Adrenal gland (tissue), 19 donors: ENCODE measurements at regions of chr10 and their contacts with region 1.

Region 1: DNA sequence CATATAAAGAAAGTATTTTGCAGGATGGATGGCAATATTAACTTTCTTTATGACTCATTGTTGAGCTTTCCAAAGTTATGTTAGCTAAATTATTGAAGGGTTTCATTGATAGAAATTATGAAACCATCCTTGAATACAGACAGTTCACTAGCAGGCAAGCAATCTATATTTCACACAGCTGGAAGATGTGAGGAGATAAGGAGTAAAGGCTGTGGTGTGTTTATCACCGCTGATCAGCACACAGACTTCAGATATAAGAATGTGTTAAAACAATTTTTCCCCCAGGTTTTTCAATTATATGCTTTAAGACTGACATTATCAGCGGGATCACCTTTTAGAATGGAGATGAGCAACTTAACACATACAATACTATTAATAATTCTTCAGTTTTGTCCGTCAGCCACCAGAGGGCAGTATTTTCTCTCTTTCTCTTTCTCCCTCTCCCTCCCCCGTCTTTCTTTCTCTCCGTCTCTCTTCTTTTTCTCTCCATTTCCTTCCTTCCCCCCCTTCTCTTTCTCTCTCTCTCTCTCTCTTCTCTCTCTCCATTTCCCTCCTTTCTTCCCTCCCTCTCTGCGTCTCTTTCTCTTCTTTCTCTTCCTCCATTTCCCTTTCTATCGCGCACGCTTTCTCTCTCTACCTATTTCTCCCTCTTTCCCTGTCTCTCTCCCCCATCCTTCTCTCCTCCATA is 62.9 kb upstream of the FAM171A1 start:
- DNase-seq: peak in 4 of 7 donors; percentile 33 to 54 (median 44)
- H3K4me3 ChIP-seq: peak overlapping the region in 1 of 4 donors; percentile 31
- H3K27ac ChIP-seq: no peak overlapping the region
- H3K4me1 ChIP-seq: no peaks in the 10 kb centered on the region
- H3K27me3 ChIP-seq: no peaks in the 10 kb centered on the region
- CTCF ChIP-seq: peak; percentile 58 to 92 (median 80)
- POLR2A ChIP-seq: no peak

Region 2: DNA sequence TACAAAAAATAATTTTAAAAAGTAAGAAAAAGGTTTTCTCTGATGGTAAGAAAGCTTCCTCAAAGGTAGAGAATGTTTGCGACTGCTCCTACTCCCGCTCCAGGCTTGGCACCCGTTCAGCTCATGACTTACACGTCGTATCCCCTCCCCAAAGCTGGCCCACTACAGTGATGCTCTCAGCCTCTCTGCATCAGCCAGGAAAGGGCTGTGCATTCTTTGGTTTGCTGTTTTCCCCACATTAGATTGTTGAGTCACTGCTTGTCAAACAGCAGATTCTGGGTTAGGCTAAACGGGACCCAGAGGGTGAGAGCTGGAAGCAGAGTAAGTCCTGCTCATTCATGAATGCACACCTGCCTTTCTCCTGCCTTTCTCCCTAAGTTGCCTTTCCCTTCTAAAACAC is 210.8 kb before region 1 on chr10:
- intact Hi-C with region 1: no loop called
- DNase-seq: no peak
- H3K4me3 ChIP-seq: no peak overlapping the region
- H3K27ac ChIP-seq: no peak overlapping the region
- H3K4me1 ChIP-seq: no peaks in the 10 kb centered on the region
- H3K27me3 ChIP-seq: no peaks in the 10 kb centered on the region
- CTCF ChIP-seq: no peak
- POLR2A ChIP-seq: no peak

Region 3: DNA sequence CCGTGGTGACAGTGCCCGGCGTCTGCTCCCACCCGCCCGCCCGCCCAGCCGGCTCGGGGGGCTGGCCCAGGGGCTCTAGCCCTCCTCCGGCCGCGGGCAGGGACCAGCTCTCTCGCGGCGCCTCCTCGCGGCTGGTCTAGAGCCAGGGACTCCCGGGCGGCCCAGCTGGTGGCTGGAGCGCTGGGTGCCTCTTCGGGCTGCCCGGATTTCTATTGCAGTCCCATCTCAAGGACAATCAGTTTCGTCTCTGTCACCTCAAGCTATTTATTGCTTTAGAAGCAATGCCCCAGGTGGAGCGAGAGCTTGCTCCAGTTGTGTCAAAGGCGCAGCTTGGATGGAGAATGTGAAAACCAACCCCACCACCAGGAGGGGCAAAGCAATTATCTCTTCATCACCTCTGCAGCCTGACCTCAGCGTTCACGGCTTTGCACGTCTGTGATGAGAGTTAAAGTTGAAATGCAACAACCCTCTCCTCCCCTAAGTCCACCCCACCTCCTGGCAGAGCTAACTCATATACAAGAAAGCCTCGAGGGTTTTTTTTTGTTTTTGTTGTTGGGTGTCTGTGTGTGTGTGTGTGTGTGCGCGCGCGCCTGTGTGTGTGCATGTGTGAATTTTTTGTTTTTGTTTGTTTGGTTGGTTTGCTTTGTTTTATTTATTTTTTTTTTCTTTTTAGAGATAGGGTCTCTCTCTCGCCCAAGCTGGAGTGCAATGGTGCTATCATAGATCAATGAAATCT is 286.1 kb after region 1 on chr10 and contains the start of gene ITGA8:
- intact Hi-C with region 1: loop called (anchors 5 kb)
- DNase-seq: peak in 5 of 7 donors; percentile 27 to 63 (median 37)
- H3K4me3 ChIP-seq: peak within 1 kb of the TSS in 2 of 4 donors; percentile 37 to 58
- H3K27ac ChIP-seq: peak within 1 kb of the TSS in 3 of 5 donors; percentile 10 to 75 (median 57)
- H3K4me1 ChIP-seq: peaks cover 0 to 4% of the 10 kb centered on the region in 2 donors
- H3K27me3 ChIP-seq: peaks cover 11% of the 10 kb centered on the region
- CTCF ChIP-seq: peak; percentile 6 to 50 (median 38)
- POLR2A ChIP-seq: no peak
- total RNA-seq, gene ITGA8: 4.7 to 46.0 (median 25.9) TPM

Region 4: DNA sequence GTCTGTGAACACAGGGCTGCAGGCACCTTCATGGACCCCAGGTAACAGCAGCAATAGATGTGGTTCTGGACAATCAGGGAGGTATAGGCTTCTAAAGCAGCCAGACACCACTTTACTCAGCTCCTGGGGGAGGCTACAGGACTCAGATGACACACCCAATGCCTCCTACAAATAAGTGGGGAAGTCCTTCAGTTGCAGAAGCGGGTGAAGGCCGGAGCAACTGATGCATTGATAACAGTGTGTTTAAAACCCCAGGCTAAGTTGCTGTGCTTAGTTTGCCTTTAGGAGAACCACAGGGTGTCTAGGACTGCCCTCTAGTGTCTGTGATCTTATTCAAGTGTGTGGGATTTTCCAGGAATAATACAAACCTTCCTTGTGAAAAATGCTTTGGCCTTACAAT is 291.6 kb after region 1 on chr10:
- intact Hi-C with region 1: loop called in 1 of 2 experiments (anchors 5 kb)
- DNase-seq: peak; percentile 31 to 64 (median 52)
- H3K4me3 ChIP-seq: no peak overlapping the region
- H3K27ac ChIP-seq: no peak overlapping the region
- H3K4me1 ChIP-seq: peaks cover 3 to 5% of the 10 kb centered on the region in 2 donors
- H3K27me3 ChIP-seq: no peaks in the 10 kb centered on the region
- CTCF ChIP-seq: peak; percentile 25 to 65 (median 59)
- POLR2A ChIP-seq: no peak

Region 5: DNA sequence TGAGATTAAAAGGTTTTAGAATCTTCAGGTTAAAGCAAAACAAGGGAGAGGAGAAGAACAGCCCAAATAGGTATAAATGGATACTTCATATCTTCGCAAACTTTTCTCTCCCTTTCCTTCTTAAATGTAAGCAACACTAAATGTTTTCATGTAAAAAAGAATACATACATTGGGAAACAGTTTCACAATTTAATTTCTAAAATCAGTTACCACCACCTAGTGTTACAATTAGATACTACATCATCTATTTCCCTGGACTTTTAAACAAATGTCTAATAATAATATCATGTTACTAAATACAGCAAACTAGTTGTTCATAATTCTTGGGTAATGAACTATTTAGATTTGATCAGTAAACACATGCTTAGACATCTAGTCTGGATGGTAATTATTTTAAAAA is 390.5 kb after region 1 on chr10:
- intact Hi-C with region 1: loop called in 1 of 2 experiments (anchors 10 kb)
- DNase-seq: no peak
- H3K4me3 ChIP-seq: no peak overlapping the region
- H3K27ac ChIP-seq: no peak overlapping the region
- H3K4me1 ChIP-seq: no peaks in the 10 kb centered on the region
- H3K27me3 ChIP-seq: no peaks in the 10 kb centered on the region
- CTCF ChIP-seq: peak; percentile 32 to 76 (median 56)
- POLR2A ChIP-seq: no peak